ENCODE measurements at regions of chr15 and their contacts with region 1.

Region 1: DNA sequence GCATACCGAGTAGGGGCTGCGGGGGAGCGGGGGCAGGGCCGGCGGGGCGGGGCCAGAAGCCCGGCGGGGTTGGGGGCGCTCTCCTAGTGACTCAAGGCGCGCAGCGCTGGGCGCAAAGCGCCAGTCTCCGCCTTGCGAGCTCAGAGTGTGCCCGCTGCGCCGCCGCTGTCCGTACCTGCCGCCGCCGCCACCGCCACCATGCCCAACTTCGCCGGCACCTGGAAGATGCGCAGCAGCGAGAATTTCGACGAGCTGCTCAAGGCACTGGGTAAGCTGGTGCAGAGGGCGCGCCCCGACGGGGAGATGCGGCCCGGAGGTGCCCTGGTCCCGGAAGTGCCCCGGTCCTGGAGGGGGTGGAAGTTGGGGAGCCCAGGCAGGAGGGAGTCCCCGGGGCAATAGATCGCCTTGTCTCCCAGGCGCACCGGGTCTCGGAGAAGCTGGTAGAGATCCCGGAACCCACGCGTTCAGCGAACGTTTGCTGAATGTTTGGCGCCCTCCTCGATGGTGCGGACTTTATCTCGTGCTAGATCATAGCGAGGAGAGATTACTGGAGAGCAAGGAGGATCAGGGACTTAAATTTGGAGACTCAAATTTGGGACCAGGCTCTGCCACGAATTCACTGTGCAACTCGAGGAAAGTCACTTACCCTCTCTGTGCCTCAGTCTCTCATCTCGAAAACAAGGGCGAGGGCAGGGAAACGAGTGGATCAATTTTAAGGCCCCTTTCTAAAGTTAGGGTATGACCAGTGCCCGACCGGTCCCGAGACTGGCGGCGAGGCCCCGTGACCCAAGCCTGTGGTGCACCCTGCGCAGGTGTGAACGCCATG is at the start of gene CRABP1:
- DNase-seq: peak in 1 of 2 experiments; percentile 84
- H3K4me3 ChIP-seq: peak within 1 kb of the TSS; percentile 39 to 78 (median 66)
- H3K27ac ChIP-seq: no peak within 1 kb of the TSS
- H3K4me1 ChIP-seq: peaks cover 2 to 17% (median 8%) of the 10 kb centered on the region in 4 experiments; a peak in 5 of 7 replicates
- H3K27me3 ChIP-seq: peaks cover 0 to 24% (median 16%) of the 10 kb centered on the region in 4 experiments; a peak in 5 of 7 replicates
- CTCF ChIP-seq: no peak
- EP300 ChIP-seq: no peak
- POLR2A ChIP-seq: peak; percentile 42 to 64; a peak in 2 of 3 replicates
- RAD21 ChIP-seq: 0 out of 4 replicates have a peak, but pooled peaks of 1 of the 2 experiments have one; percentile 12
- total RNA-seq, gene CRABP1: 385 and 388 TPM in 2 replicates

Region 2: DNA sequence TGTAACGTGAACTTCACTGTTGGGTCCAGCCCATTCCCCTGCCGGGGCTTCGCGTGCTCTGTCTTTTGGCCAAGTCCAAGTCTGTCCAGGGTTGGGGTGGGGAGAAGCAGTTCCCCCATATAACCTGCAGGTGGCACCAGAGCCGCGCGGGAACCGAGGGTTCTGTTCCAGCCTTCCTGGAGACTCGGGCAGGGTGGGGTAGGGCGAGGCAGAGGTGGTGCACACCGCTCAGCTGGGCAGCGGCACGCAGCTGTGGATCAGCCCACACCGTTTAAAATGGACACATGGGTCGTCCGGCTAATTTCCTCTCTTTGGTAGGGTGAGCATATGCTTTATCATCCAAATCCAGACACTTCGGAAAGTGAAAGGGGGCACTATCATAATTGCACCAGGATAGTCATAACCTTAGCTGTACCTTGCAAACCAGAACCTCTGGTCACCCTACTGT is 381.0 kb before region 1 on chr15:
- CTCF ChIA-PET with region 1: no interaction called
- POLR2A ChIA-PET with region 1: no interaction called
- DNase-seq: peak; percentile 58 to 99
- H3K4me3 ChIP-seq: no peak overlapping the region
- H3K27ac ChIP-seq: no peak overlapping the region
- H3K4me1 ChIP-seq: peaks cover 0 to 5% (median 1%) of the 10 kb centered on the region in 4 experiments; a peak in 4 of 7 replicates
- H3K27me3 ChIP-seq: no peaks in the 10 kb centered on the region; a peak in 1 of 7 replicates
- CTCF ChIP-seq: peak; percentile 90 to 97 (median 97)
- EP300 ChIP-seq: no peak
- POLR2A ChIP-seq: no peak
- RAD21 ChIP-seq: peak; percentile 97 to 98

Region 3: DNA sequence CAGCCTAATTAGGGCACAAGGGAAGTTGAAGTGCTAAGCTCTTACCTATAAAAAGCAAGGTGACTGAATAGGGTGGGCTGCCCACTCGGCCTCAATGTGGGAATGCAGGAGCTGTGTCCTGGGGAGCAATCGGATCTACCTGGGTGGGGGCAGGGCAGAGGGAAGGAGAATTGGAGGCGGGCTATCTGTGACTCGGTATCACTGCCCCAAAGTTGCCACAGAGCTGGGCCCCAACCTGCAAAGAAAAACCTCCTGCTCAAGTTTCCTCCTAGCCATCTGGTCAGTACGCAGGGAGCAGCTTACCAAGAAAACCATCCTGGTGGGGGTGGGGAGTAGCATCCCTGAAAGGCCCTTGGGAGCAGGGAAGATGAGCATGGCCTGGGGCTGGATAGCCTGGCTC is 219.9 kb before region 1 on chr15:
- CTCF ChIA-PET with region 1: no interaction called
- POLR2A ChIA-PET with region 1: no interaction called
- DNase-seq: peak in 1 of 2 experiments; percentile 52
- H3K4me3 ChIP-seq: peak overlapping the region in 1 of 4 experiments; percentile 1; a peak in 3 of 8 replicates
- H3K27ac ChIP-seq: peak overlapping the region; percentile 32; the same call in 1 of the 2 replicates
- H3K4me1 ChIP-seq: peaks cover 0 to 11% (median 9%) of the 10 kb centered on the region in 4 experiments; a peak in 6 of 7 replicates
- H3K27me3 ChIP-seq: no peaks in the 10 kb centered on the region
- CTCF ChIP-seq: no peak
- EP300 ChIP-seq: no peak
- POLR2A ChIP-seq: no peak
- RAD21 ChIP-seq: no peak

Region 4: GRCh38 chr15:78315686-78316282 is 24.7 kb before region 1 on chr15:
- CTCF ChIA-PET with region 1: interaction called, 30 read pairs
- POLR2A ChIA-PET with region 1: interaction called, 11 read pairs
- DNase-seq: peak in 1 of 2 experiments; percentile 70
- H3K4me3 ChIP-seq: no peak overlapping the region
- H3K27ac ChIP-seq: peak overlapping the region; percentile 5; the same call in 1 of the 2 replicates
- H3K4me1 ChIP-seq: peaks cover 0 to 23% (median 12%) of the 10 kb centered on the region in 4 experiments; a peak in 6 of 7 replicates
- H3K27me3 ChIP-seq: no peaks in the 10 kb centered on the region
- CTCF ChIP-seq: peak; percentile 89 to 95 (median 92)
- EP300 ChIP-seq: no peak
- POLR2A ChIP-seq: no peak
- RAD21 ChIP-seq: peak; percentile 92 to 93

Region 5: DNA sequence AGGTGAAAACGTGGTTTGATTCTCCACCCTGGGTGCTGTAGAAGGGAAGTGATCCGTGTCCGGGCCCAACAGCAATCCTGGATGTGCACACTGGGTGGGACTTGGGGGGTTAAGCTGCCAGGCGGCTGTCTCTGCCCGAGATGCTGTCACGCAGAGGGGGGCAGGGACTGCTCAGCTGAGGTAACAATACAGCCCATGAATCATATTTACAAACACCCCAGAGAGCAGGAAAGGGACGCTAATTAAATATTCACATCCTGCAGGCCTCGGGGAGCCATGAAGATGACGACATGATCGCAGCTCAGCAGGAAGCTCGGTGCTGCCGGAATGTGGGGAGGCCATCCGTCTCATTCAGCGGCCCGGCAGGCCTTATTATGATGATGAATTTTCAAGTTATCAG is 18.2 kb before region 1 on chr15:
- CTCF ChIA-PET with region 1: interaction called, 20 read pairs
- POLR2A ChIA-PET with region 1: interaction called, 15 read pairs
- DNase-seq: no peak
- H3K4me3 ChIP-seq: no peak overlapping the region
- H3K27ac ChIP-seq: peak overlapping the region; percentile 70
- H3K4me1 ChIP-seq: peaks cover 8 to 19% (median 14%) of the 10 kb centered on the region in 4 experiments
- H3K27me3 ChIP-seq: no peaks in the 10 kb centered on the region
- CTCF ChIP-seq: no peak
- EP300 ChIP-seq: no peak
- POLR2A ChIP-seq: no peak
- RAD21 ChIP-seq: no peak

Region 6: GRCh38 chr15:78329625-78330024 is 10.8 kb before region 1 on chr15:
- CTCF ChIA-PET with region 1: interaction called, 20 read pairs
- POLR2A ChIA-PET with region 1: interaction called, 11 read pairs
- DNase-seq: no peak
- H3K4me3 ChIP-seq: no peak overlapping the region
- H3K27ac ChIP-seq: no peak overlapping the region
- H3K4me1 ChIP-seq: peaks cover 5 to 11% (median 8%) of the 10 kb centered on the region in 4 experiments
- H3K27me3 ChIP-seq: no peaks in the 10 kb centered on the region
- CTCF ChIP-seq: no peak
- EP300 ChIP-seq: no peak
- POLR2A ChIP-seq: no peak
- RAD21 ChIP-seq: no peak

Region 7: DNA sequence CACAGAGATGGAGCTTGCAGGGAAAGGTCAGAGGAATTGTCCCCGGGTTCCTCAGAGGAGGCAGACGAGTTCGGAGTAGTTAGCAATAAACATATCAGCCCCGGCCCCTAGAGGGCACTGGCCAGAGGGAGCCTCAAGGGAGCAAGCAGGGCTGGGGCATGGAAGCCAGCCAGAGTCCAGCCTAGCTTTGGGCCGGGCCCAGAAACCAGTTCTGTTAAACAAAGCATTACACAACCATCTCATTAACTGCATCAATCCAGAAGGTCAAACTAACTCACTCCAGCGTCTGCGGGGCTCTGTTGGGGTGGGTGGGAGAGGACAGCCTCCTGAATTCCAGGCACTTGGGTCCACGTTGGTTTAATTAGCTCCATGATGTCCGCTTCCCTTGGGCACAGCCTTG is 56.5 kb after region 1 on chr15:
- CTCF ChIA-PET with region 1: interaction called, 5 read pairs
- POLR2A ChIA-PET with region 1: interaction called, 10 read pairs
- DNase-seq: peak in 1 of 2 experiments; percentile 71
- H3K4me3 ChIP-seq: no peak overlapping the region
- H3K27ac ChIP-seq: no peak overlapping the region
- H3K4me1 ChIP-seq: peaks cover 4 to 31% (median 10%) of the 10 kb centered on the region in 4 experiments
- H3K27me3 ChIP-seq: peaks cover 0 to 2% (median 0%) of the 10 kb centered on the region in 4 experiments; a peak in 2 of 7 replicates
- CTCF ChIP-seq: peak; percentile 63 to 75 (median 66)
- EP300 ChIP-seq: no peak
- POLR2A ChIP-seq: no peak
- RAD21 ChIP-seq: peak; percentile 32 to 63

Measured in H1 (cell line).